Activated B cell treated with CpG ODN at 0.5 μM for 24 hours (primary cell): ENCODE measurements at regions of chr2 and their contacts with region 1.

Region 1: GRCh38 chr2:210476194-210477128 is at the start of gene LANCL1:
- DNase-seq: peak; percentile 70
- ATAC-seq: peak; percentile 100
- H3K4me3 Mint-ChIP-seq: peak within 1 kb of the TSS; percentile 99
- H3K27ac Mint-ChIP-seq: peak within 1 kb of the TSS; percentile 98
- H3K4me1 Mint-ChIP-seq: peaks cover 31% of the 10 kb centered on the region
- H3K27me3 Mint-ChIP-seq: no peaks in the 10 kb centered on the region
- CTCF ChIP-seq: no peak
- total RNA-seq, gene LANCL1: 30.4 and 30.8 TPM in 2 replicates

Region 2: DNA sequence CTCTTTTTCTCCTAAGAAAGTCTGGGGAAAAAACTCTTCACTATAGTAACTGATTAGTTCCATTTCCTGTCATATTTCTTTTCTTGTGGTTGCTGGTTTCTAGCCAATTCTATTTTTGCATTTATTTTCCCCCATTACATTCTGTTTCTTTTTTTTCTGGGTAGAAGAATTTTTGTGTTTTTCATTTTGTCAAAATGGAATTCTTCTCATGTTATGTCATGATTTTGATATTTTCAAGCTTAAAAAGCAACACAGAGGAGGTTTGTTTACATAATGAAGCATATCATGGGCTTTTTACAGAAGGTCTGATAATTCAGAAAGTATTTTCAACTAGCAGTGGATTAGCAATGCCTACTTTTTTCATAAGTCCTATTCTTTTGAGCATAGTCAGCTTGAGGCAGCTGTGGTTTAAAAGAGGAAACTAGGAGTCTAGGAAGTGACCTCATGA is 950.6 kb before region 1 on chr2:
- CTCF ChIA-PET with region 1: no interaction called
- POLR2A ChIA-PET with region 1: interaction called, 3 read pairs
- intact Hi-C with region 1: loop called (anchors 10 kb)
- DNase-seq: no peak
- ATAC-seq: no peak
- H3K4me3 Mint-ChIP-seq: peak overlapping the region; percentile 69
- H3K27ac Mint-ChIP-seq: peak overlapping the region; percentile 78
- H3K4me1 Mint-ChIP-seq: peaks cover 50% of the 10 kb centered on the region
- H3K27me3 Mint-ChIP-seq: no peaks in the 10 kb centered on the region
- CTCF ChIP-seq: no peak

Region 3: DNA sequence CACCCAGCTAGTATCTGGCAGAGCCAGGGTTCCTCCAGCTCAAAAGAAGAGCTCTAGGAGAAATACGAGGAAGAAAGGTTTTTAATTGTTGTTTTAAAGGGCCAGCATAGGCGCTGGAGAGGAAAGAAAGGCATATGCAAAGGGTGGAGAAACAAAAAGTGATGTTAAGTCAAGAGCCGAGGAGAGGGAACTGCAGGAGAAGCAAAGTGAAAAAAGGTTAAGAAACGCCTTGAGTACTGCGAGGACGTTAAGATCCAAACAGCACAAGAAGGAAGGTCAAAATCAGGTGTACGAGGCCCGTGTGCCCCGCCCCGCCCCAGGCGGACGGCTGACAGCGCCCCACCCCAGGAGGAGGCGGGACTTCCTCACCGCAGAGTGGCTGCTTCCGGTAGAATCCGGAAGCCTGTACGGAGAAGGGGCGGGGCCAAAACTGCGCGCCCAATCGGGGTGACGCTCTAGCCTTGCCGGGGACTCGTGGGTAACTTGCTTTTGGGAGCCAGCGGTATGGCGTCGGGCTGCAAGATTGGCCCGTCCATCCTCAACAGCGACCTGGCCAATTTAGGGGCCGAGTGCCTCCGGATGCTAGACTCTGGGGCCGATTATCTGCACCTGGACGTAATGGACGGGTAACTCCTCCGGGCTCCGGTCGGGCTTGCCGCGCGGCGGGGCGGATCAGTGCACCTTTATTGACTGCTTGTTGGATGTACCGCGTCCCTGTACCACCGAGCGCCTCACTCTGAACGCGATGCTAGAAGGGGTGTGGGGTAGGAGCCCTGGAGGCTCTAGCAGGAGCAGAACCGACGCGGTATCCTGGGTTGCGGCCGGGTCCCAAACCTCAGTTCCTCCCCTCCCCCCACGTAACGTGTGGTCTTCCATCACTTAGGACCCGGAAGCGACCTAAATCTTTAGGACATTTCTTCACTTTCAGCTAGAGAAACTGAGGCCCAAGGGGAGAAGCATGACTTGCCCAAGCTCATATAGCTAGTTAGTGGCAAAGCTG is 474.0 kb before region 1 on chr2 and contains the start of gene RPE:
- CTCF ChIA-PET with region 1: no interaction called
- POLR2A ChIA-PET with region 1: no interaction called
- intact Hi-C with region 1: loop called (anchors 1 kb)
- DNase-seq: peak; percentile 96
- ATAC-seq: peak; percentile 99
- H3K4me3 Mint-ChIP-seq: peak within 1 kb of the TSS; percentile 96
- H3K27ac Mint-ChIP-seq: peak within 1 kb of the TSS; percentile 89
- H3K4me1 Mint-ChIP-seq: peaks cover 55% of the 10 kb centered on the region
- H3K27me3 Mint-ChIP-seq: peaks cover 3% of the 10 kb centered on the region
- CTCF ChIP-seq: no peak
- total RNA-seq, gene RPE: 43.3 and 54.7 TPM in 2 replicates

Region 4: GRCh38 chr2:210171309-210172203 is 304.9 kb before region 1 on chr2 and contains the start of gene KANSL1L:
- CTCF ChIA-PET with region 1: no interaction called
- POLR2A ChIA-PET with region 1: no interaction called
- intact Hi-C with region 1: loop called (anchors 1 kb)
- DNase-seq: peak; percentile 99
- ATAC-seq: peak; percentile 83
- H3K4me3 Mint-ChIP-seq: peak within 1 kb of the TSS; percentile 97
- H3K27ac Mint-ChIP-seq: peak within 1 kb of the TSS; percentile 94
- H3K4me1 Mint-ChIP-seq: peaks cover 24% of the 10 kb centered on the region
- H3K27me3 Mint-ChIP-seq: peaks cover 8% of the 10 kb centered on the region
- CTCF ChIP-seq: no peak
- total RNA-seq, gene KANSL1L: 13.1 and 14.2 TPM in 2 replicates

Region 5: GRCh38 chr2:210376694-210377093 is 99.8 kb before region 1 on chr2:
- CTCF ChIA-PET with region 1: no interaction called
- POLR2A ChIA-PET with region 1: no interaction called
- intact Hi-C with region 1: no loop called
- DNase-seq: no peak
- ATAC-seq: no peak
- H3K4me3 Mint-ChIP-seq: no peak overlapping the region
- H3K27ac Mint-ChIP-seq: no peak overlapping the region
- H3K4me1 Mint-ChIP-seq: no peaks in the 10 kb centered on the region
- H3K27me3 Mint-ChIP-seq: no peaks in the 10 kb centered on the region
- CTCF ChIP-seq: no peak

Region 6: GRCh38 chr2:210460322-210461227 is 15.9 kb before region 1 on chr2:
- CTCF ChIA-PET with region 1: no interaction called
- POLR2A ChIA-PET with region 1: interaction called, 13 read pairs
- intact Hi-C with region 1: loop called (anchors 1 kb)
- DNase-seq: no peak
- ATAC-seq: peak; percentile 20
- H3K4me3 Mint-ChIP-seq: peak overlapping the region; percentile 61
- H3K27ac Mint-ChIP-seq: peak overlapping the region; percentile 87
- H3K4me1 Mint-ChIP-seq: peaks cover 68% of the 10 kb centered on the region
- H3K27me3 Mint-ChIP-seq: no peaks in the 10 kb centered on the region
- CTCF ChIP-seq: no peak

Region 7: GRCh38 chr2:210496512-210496911 is 20.1 kb after region 1 on chr2:
- CTCF ChIA-PET with region 1: no interaction called
- POLR2A ChIA-PET with region 1: no interaction called
- intact Hi-C with region 1: loop called (anchors 2 kb)
- DNase-seq: no peak
- ATAC-seq: peak; percentile 79
- H3K4me3 Mint-ChIP-seq: no peak overlapping the region
- H3K27ac Mint-ChIP-seq: no peak overlapping the region
- H3K4me1 Mint-ChIP-seq: peaks cover 8% of the 10 kb centered on the region
- H3K27me3 Mint-ChIP-seq: no peaks in the 10 kb centered on the region
- CTCF ChIP-seq: no peak

Region 8: GRCh38 chr2:210584834-210585233 is 108.4 kb after region 1 on chr2:
- CTCF ChIA-PET with region 1: no interaction called
- POLR2A ChIA-PET with region 1: no interaction called
- intact Hi-C with region 1: no loop called
- DNase-seq: no peak
- ATAC-seq: no peak
- H3K4me3 Mint-ChIP-seq: no peak overlapping the region
- H3K27ac Mint-ChIP-seq: no peak overlapping the region
- H3K4me1 Mint-ChIP-seq: no peaks in the 10 kb centered on the region
- H3K27me3 Mint-ChIP-seq: no peaks in the 10 kb centered on the region
- CTCF ChIP-seq: no peak

Region 9: GRCh38 chr2:211068108-211068780 is 591.8 kb after region 1 on chr2:
- CTCF ChIA-PET with region 1: no interaction called
- POLR2A ChIA-PET with region 1: no interaction called
- intact Hi-C with region 1: no loop called
- DNase-seq: no peak
- ATAC-seq: no peak
- H3K4me3 Mint-ChIP-seq: no peak overlapping the region
- H3K27ac Mint-ChIP-seq: no peak overlapping the region
- H3K4me1 Mint-ChIP-seq: no peaks in the 10 kb centered on the region
- H3K27me3 Mint-ChIP-seq: no peaks in the 10 kb centered on the region
- CTCF ChIP-seq: no peak